Activated B cell treated with CpG ODN at 0.5 μM for 24 hours (primary cell): ENCODE measurements at regions of chr3 and their contacts with region 1.

Region 1: GRCh38 chr3:111650378-111651275 is 55.5 kb upstream of the ZBED2 start:
- DNase-seq: no peak
- ATAC-seq: no peak
- H3K4me3 Mint-ChIP-seq: no peak overlapping the region
- H3K27ac Mint-ChIP-seq: no peak overlapping the region
- H3K4me1 Mint-ChIP-seq: peaks cover 53% of the 10 kb centered on the region
- H3K27me3 Mint-ChIP-seq: no peaks in the 10 kb centered on the region
- CTCF ChIP-seq: no peak

Region 2: DNA sequence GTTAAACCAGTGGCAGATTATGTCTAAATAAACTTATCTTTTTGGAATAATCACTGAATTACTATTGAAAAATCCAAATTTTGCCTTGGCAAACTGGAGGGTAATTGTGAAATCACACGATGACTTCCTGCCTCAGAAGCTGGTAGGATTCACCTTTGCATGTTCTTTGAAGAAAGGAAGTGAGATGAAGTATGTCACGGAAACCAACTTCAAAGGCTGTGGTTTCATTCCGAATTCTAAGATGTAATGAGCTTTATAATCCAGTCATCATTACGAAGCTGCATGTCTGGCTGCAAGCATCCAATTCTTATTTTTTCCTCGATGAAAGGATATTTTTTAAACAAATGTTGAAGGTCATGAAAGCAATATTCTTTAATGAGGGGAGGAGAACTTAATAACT is 40.4 kb before region 1 on chr3:
- CTCF ChIA-PET with region 1: no interaction called
- POLR2A ChIA-PET with region 1: no interaction called
- intact Hi-C with region 1: loop called (anchors 5 kb)
- DNase-seq: no peak
- ATAC-seq: peak; percentile 80
- H3K4me3 Mint-ChIP-seq: peak overlapping the region; percentile 58
- H3K27ac Mint-ChIP-seq: peak overlapping the region; percentile 83
- H3K4me1 Mint-ChIP-seq: peaks cover 43% of the 10 kb centered on the region
- H3K27me3 Mint-ChIP-seq: no peaks in the 10 kb centered on the region
- CTCF ChIP-seq: no peak